AG04449 (cell line): ENCODE measurements at regions of chr2 and their contacts with region 1.

Region 1: DNA sequence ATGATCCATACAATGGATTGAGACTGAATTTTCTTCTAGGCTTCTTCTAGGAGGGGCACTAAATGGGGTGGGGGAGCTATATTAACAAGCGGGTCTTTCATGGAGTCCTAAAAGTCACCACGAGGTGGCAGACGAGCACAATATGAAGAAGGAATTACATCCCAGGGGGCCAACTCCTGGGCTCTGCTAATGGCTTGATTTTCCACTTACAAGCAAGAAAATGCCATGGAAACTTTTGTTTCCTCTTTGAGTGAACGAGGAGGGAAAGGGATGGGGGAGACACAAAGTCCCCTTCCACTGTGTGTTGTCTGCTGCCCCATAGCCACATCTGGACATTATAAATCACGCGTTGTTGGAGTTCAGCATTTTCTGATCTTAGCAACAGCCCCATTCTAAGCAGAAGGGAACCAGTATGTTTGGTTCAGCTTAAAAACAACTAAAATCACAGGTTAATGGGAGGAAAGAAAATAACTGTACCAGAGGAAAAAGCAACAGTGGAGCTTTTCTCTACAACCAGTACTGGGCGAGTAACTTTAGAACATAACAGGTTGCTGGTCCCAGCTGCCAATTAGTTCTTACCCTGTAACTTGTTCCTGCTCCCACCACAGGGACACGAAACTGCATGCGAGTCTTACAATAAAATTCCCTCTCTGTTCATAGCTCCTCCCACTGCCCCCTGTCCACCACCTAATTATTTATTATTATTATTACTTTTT is 285.0 kb upstream of the PARD3B start:
- DNase-seq: peak; percentile 21
- H3K4me3 ChIP-seq: no peak overlapping the region
- CTCF ChIP-seq: peak; percentile 59

Region 2: GRCh38 chr2:204272089-204272488 is 11.8 kb after region 1 on chr2:
- CTCF ChIA-PET with region 1: interaction called, 20 read pairs
- POLR2A ChIA-PET with region 1: no interaction called
- DNase-seq: no peak
- H3K4me3 ChIP-seq: no peak overlapping the region
- CTCF ChIP-seq: no peak

Region 3: GRCh38 chr2:204280262-204280668 is 19.9 kb after region 1 on chr2:
- CTCF ChIA-PET with region 1: interaction called, 16 read pairs
- POLR2A ChIA-PET with region 1: no interaction called
- DNase-seq: no peak
- H3K4me3 ChIP-seq: no peak overlapping the region
- CTCF ChIP-seq: no peak

Region 4: DNA sequence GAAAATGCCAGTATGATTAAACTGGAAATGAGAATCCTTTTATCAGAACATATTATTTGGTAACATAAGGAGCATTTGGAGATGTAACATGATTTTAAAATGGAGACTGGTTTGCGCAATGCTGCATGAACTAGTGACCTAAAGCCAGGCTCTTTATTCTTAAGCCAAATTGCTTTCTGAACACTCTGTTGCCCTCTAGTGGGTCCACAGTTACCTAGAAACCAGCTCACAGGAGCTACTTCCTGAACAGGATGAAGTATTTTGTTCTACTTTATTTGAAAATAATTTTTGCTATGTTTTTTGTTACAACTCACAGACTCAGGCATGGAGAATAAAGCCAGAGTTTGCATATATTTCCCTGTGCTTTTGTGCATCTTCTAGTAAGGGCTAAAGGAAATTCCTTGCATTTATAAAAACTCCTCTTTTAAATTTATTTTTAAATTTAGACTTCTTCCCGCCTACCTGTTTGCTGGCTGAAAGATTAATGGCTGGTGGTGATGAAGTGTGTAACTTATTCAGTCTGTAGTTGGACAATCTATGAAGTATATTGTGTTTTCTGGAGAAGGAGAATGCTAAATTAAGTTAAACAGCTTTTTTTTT is 431.7 kb after region 1 on chr2:
- CTCF ChIA-PET with region 1: interaction called, 15 read pairs
- POLR2A ChIA-PET with region 1: no interaction called
- DNase-seq: peak; percentile 55
- H3K4me3 ChIP-seq: no peak overlapping the region
- CTCF ChIP-seq: peak; percentile 63

Region 5: GRCh38 chr2:205947621-205948495 is 1687.5 kb after region 1 on chr2:
- CTCF ChIA-PET with region 1: interaction called, 14 read pairs
- POLR2A ChIA-PET with region 1: no interaction called
- DNase-seq: peak; percentile 10
- H3K4me3 ChIP-seq: no peak overlapping the region
- CTCF ChIP-seq: peak; percentile 89